AG04449 (cell line): ENCODE measurements at regions of chr2 and their contacts with region 1.

Region 1: DNA sequence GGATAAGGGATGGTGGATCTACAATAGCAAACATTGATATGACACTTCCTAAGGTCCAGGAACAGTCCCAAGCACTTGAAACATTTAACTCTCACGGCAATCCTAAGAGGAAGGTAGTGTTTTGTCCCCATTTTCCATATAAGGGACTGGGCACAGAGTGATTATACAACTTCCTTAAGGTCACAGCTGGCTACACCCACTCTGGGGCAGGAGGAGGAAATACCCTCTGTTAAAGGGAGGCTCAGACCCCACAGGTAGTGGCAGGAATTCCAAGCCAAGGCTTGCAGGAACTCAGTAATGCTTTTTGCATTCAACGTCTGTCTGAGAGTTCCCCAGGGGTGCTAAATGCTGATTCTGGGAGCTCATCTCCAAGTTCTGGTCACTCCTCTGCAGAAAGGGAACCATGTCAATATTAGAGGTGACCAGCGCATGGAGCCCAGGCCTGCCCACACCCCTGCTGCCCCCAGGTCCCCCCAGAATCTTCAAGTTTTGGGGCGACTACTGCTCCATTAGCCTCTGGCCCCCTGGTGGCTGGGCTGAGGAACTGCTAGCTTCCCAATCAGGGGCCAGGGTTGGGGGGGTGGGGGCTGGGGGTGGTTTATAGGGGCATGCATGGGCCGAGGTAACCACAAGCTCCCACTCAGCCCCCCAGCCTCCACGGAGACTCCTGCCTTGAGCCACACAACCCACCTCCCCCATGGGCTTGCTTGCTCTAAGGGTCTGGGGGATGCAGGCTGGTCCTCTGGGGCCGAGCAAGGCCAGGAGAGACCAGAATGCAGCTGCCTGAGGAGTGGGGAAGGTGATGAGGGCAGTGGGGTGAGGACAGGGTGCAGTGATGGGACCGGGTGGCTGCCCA is 11.1 kb downstream of the OBSL1 start:
- DNase-seq: no peak
- H3K4me3 ChIP-seq: no peak overlapping the region
- CTCF ChIP-seq: peak; percentile 69

Region 2: GRCh38 chr2:219543601-219544358 is 16.5 kb before region 1 on chr2 and contains the starts of genes CHPF and TMEM198:
- CTCF ChIA-PET with region 1: interaction called, 72 read pairs
- POLR2A ChIA-PET with region 1: interaction called, 3 read pairs
- DNase-seq: peak; percentile 87
- H3K4me3 ChIP-seq: peak within 1 kb of the TSS; percentile 80
- CTCF ChIP-seq: no peak

Region 3: GRCh38 chr2:219571311-219572236 is 11.3 kb after region 1 on chr2 and contains the start of gene OBSL1:
- CTCF ChIA-PET with region 1: interaction called, 46 read pairs
- POLR2A ChIA-PET with region 1: interaction called, 5 read pairs
- DNase-seq: peak; percentile 24
- H3K4me3 ChIP-seq: peak within 1 kb of the TSS; percentile 72
- CTCF ChIP-seq: no peak

Region 4: DNA sequence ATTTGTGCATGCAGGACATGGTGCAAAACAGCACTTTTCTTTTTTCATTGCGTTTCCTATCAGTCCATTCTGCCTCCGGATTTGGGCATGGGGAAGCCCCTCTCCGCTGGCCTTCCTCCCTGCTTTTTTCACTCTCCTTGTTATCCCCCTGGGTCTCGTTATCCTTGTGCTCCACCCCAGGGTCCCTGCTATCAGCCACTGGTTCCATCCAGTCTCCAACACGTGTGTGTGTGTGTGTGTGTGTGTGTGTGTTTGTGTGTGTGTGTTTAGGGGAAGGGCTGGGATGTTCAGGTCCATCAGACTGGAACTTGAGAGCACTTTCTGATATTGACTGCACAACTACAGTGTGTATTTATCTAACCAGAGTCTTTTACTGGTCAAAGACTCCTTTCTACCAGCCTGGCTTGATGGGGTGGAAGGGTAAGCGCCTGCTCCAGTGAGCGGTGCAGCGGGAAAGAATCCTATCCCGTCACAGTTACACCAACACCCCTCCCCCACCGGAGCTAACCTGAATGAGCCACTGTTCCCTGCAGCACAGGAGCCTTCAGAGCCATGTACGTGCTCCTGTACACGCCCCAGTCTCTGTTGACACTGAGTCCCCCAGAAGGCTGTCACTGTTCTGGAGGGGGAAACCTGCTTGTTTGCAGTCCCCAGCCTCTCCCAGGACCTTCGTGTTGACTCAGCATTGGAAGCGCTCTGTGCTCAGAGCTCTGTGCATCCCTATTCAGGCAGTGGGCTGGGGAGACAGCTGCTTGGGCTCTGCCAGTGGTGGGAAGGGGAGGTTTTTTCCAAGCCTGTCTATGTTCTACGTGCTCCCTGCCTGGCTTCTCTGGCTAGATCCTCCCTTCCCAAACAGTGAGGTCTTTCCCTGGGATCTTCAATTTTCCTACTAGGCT is 16.5 kb after region 1 on chr2:
- CTCF ChIA-PET with region 1: interaction called, 46 read pairs
- POLR2A ChIA-PET with region 1: interaction called, 5 read pairs
- DNase-seq: no peak
- H3K4me3 ChIP-seq: no peak overlapping the region
- CTCF ChIP-seq: no peak

Region 5: DNA sequence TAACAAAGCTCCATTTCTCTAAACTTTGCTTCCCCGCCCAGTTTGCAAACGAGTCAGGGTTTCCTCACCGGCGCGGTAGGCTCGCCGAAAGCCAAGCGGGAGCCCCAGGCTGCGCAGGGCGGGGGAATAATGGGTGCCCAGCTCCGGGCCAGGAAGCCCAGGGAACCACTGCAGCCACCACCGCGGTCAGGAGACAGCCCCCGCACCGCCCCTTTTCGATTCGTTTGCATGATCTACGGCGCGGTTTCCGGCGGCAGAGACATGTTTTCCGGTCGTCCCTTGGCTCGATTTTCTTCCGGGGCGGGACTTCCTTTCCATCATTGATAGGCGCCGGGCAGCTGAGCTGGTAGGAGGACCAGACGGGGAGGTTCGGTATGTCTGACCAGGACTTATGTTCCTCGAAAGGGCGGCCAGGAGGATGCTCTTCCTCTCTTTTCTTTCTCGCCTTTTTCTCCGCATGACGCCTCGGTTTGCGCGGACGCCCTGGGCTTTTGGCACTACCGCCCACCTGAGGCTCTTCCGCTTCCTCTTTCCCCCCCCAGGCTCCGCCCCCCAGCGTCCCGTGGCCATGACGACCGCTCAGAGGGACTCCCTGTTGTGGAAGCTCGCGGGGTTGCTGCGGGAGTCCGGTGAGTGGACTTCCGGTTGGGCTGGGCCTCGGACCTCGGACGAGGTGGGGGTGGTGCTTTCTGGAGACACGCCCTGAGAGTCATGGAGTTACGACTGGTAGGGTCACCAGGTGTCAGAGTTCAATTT is 37.5 kb after region 1 on chr2 and contains the start of gene STK11IP:
- CTCF ChIA-PET with region 1: interaction called, 15 read pairs
- POLR2A ChIA-PET with region 1: interaction called, 4 read pairs
- DNase-seq: peak; percentile 70
- H3K4me3 ChIP-seq: peak within 1 kb of the TSS; percentile 84
- CTCF ChIP-seq: no peak

Region 6: DNA sequence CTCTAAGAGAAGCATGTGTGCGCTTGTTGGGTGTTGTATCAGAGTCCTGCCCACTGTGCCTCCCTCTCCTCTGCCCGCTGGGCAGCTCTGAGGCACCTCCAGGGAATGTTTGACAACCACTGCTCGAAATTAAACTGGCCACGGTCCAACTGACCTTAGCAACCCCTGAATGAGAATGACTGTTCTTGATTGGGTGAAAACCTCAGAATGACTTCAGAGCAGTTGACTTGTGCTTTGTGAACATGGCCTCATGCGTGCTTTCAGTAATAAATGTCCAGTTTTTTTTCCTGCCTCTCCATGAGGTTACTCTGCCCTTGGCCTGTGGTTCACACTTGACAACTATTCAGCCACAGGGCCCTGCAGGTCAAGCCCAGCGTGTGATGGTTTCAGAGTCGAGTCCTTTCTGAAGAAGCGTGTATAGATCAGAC is 162.1 kb after region 1 on chr2:
- CTCF ChIA-PET with region 1: no interaction called
- POLR2A ChIA-PET with region 1: no interaction called
- DNase-seq: no peak
- H3K4me3 ChIP-seq: no peak overlapping the region
- CTCF ChIP-seq: no peak